Activated CD4-positive, alpha-beta memory T cell treated with anti-CD3 and anti-CD28 coated beads for 36 hours (primary cell): ENCODE measurements at regions of chr17 and their contacts with region 1.

Region 1: DNA sequence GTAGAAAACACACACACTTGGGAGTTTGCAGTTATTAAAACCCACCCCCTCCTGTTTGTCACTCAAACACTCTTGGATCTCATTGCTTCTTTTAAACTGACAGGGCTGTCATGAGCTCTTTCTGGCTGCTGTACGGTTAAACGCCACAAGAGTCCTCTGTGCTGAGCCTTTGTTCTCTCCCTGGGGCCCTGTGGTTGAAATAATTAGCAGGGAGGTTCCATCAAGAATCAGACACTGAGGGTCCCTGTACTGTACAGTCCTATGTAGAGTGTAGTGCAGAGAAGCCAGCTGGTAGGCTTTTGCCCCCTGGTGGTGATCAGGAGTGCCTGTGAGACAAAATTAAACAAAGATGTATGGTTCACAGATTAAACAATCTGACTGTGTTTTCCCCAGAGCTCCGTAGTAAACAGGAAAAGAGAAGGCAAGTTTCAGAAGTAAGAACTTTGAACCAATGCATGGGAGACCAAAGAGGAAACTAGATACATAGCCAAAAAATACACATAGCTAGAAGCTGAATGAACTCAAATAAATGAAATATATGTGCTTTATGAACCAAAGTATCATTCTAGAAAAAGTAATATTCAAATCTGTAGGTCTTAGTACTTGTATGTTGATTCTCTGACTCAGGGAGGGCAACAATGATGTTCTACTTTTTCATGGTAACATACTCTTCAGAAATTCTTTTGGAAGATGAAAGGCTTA is 1.4 kb upstream of the SSH2 start:
- DNase-seq: peak; percentile 75
- H3K4me3 Mint-ChIP-seq: no peak overlapping the region
- H3K27ac Mint-ChIP-seq: no peak overlapping the region
- H3K4me1 Mint-ChIP-seq: peaks cover 18% of the 10 kb centered on the region
- H3K27me3 Mint-ChIP-seq: no peaks in the 10 kb centered on the region

Region 2: GRCh38 chr17:29617125-29617480 is 314.3 kb before region 1 on chr17:
- CTCF ChIA-PET with region 1: interaction called, 51 read pairs
- POLR2A ChIA-PET with region 1: interaction called, 18 read pairs
- intact Hi-C with region 1: no loop called
- DNase-seq: peak; percentile 97
- H3K4me3 Mint-ChIP-seq: peak overlapping the region; percentile 77
- H3K27ac Mint-ChIP-seq: peak overlapping the region; percentile 87
- H3K4me1 Mint-ChIP-seq: peaks cover 52% of the 10 kb centered on the region
- H3K27me3 Mint-ChIP-seq: peaks cover 1% of the 10 kb centered on the region

Region 3: GRCh38 chr17:29760761-29761696 is 170.4 kb before region 1 on chr17:
- CTCF ChIA-PET with region 1: interaction called, 8 read pairs
- POLR2A ChIA-PET with region 1: interaction called, 4 read pairs
- intact Hi-C with region 1: loop called (anchors 1 kb)
- DNase-seq: peak; percentile 96
- H3K4me3 Mint-ChIP-seq: peak overlapping the region; percentile 98
- H3K27ac Mint-ChIP-seq: peak overlapping the region; percentile 99
- H3K4me1 Mint-ChIP-seq: peaks cover 28% of the 10 kb centered on the region
- H3K27me3 Mint-ChIP-seq: no peaks in the 10 kb centered on the region

Region 4: GRCh38 chr17:29838961-29839360 is 92.4 kb before region 1 on chr17:
- CTCF ChIA-PET with region 1: interaction called, 11 read pairs
- POLR2A ChIA-PET with region 1: no interaction called
- intact Hi-C with region 1: no loop called
- DNase-seq: no peak
- H3K4me3 Mint-ChIP-seq: no peak overlapping the region
- H3K27ac Mint-ChIP-seq: no peak overlapping the region
- H3K4me1 Mint-ChIP-seq: no peaks in the 10 kb centered on the region
- H3K27me3 Mint-ChIP-seq: no peaks in the 10 kb centered on the region

Region 5: DNA sequence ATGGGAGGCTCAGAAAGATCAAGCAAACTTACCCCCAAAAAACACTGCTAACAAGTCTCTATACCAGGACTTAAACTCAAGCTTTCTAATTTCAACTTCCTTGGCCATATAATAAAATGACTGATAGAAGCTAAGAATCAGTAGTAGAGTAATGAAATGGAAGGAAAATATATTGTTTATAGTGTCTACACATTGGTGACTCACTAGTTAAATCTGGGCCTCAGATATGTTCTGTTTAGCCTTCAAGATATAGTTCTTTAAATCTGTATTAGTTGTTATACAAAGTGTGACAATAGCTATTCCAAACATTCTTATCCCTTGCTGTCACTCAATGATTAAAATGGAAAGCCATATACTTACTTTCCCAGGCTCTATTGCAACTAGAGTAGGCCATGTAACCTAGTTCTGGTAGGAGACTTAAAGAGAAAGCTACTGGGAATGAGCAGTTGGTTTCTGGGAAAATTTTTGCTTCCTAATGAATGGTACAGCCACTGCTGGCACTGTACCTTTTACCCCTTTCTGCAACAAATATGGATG is 19.7 kb before region 1 on chr17:
- CTCF ChIA-PET with region 1: interaction called, 17 read pairs
- POLR2A ChIA-PET with region 1: interaction called, 6 read pairs
- intact Hi-C with region 1: no loop called
- DNase-seq: no peak
- H3K4me3 Mint-ChIP-seq: no peak overlapping the region
- H3K27ac Mint-ChIP-seq: no peak overlapping the region
- H3K4me1 Mint-ChIP-seq: peaks cover 24% of the 10 kb centered on the region
- H3K27me3 Mint-ChIP-seq: no peaks in the 10 kb centered on the region

Region 6: GRCh38 chr17:30068465-30068864 is 137.1 kb after region 1 on chr17:
- CTCF ChIA-PET with region 1: no interaction called
- POLR2A ChIA-PET with region 1: no interaction called
- intact Hi-C with region 1: no loop called
- DNase-seq: no peak
- H3K4me3 Mint-ChIP-seq: no peak overlapping the region
- H3K27ac Mint-ChIP-seq: no peak overlapping the region
- H3K4me1 Mint-ChIP-seq: no peaks in the 10 kb centered on the region
- H3K27me3 Mint-ChIP-seq: peaks cover 3% of the 10 kb centered on the region

Region 7: GRCh38 chr17:30093463-30094147 is 162.2 kb after region 1 on chr17:
- CTCF ChIA-PET with region 1: interaction called, 13 read pairs
- POLR2A ChIA-PET with region 1: no interaction called
- intact Hi-C with region 1: no loop called
- DNase-seq: peak; percentile 46
- H3K4me3 Mint-ChIP-seq: no peak overlapping the region
- H3K27ac Mint-ChIP-seq: no peak overlapping the region
- H3K4me1 Mint-ChIP-seq: peaks cover 4% of the 10 kb centered on the region
- H3K27me3 Mint-ChIP-seq: peaks cover 13% of the 10 kb centered on the region